PC-9 (cell line): ENCODE measurements at regions of chr12 and their contacts with region 1.

Region 1: DNA sequence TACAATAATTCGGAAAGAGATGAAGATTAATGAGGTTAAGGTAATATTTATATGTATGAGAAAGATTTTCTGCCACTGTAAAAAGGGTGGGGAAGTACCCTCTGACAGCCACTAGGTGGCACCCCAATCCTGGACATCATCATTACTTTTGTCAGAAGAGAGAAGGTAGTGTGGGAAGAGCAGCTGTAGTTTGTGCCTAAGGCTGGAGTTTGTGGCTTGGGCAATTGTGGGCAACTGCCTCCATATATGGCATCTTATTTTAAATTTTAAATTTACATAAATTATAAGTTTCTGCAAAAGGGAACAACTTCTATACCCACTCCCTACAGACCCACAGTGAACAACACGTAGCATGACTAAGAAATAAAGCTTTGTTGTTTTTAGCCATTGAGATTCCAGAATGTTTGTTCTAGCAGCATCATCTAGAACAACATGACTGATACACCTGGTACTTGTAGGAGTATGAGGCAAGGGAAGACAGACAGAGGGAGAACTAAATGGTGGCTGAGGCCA is 34.4 kb upstream of the SYCP3 start:
- DNase-seq: peak; percentile 38 to 42
- H3K4me3 ChIP-seq: no peak overlapping the region
- H3K27ac ChIP-seq: no peak overlapping the region
- H3K4me1 ChIP-seq: no peaks in the 10 kb centered on the region
- H3K27me3 ChIP-seq: no peaks in the 10 kb centered on the region
- CTCF ChIP-seq: peak; percentile 96

Region 2: GRCh38 chr12:100955139-100955538 is 818.6 kb before region 1 on chr12:
- CTCF ChIA-PET with region 1: no interaction called
- POLR2A ChIA-PET with region 1: no interaction called
- intact Hi-C with region 1: no loop called
- DNase-seq: no peak
- H3K4me3 ChIP-seq: no peak overlapping the region
- H3K27ac ChIP-seq: no peak overlapping the region
- H3K4me1 ChIP-seq: no peaks in the 10 kb centered on the region
- H3K27me3 ChIP-seq: peaks cover 27% of the 10 kb centered on the region; the same call in 1 of the 2 replicates
- CTCF ChIP-seq: no peak

Region 3: DNA sequence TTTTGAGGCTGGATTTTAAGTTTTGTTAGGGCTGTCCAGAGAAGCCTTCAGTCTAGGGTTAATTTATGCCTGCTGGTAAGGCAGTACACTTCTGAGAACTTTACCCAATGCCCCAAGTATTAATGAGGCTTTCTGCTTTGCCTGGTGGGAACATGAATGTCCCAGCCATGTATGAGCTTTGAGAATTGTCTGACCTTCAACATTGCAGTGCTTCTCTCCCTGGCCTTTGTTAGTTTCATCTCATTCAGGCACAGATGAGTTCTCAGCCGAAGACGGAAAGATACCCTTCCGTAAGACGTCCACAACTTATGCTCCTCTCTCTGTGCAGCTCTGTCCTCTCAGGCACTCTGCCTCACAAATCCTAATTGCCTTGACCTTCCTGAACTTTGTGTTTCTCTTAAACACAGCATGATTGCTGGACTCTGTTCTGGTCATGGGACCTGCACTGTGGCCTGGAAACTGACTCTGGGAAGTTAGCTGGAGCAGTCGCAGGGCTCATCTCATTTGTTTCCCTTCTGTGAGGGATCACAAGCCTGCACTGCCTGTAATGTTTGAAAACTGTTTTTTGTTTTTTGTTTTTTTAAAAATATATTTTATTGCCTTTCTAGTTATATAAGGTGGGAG is 60.5 kb before region 1 on chr12:
- CTCF ChIA-PET with region 1: no interaction called
- POLR2A ChIA-PET with region 1: no interaction called
- intact Hi-C with region 1: no loop called
- DNase-seq: no peak
- H3K4me3 ChIP-seq: no peak overlapping the region
- H3K27ac ChIP-seq: no peak overlapping the region
- H3K4me1 ChIP-seq: no peaks in the 10 kb centered on the region
- H3K27me3 ChIP-seq: no peaks in the 10 kb centered on the region
- CTCF ChIP-seq: no peak

Region 4: DNA sequence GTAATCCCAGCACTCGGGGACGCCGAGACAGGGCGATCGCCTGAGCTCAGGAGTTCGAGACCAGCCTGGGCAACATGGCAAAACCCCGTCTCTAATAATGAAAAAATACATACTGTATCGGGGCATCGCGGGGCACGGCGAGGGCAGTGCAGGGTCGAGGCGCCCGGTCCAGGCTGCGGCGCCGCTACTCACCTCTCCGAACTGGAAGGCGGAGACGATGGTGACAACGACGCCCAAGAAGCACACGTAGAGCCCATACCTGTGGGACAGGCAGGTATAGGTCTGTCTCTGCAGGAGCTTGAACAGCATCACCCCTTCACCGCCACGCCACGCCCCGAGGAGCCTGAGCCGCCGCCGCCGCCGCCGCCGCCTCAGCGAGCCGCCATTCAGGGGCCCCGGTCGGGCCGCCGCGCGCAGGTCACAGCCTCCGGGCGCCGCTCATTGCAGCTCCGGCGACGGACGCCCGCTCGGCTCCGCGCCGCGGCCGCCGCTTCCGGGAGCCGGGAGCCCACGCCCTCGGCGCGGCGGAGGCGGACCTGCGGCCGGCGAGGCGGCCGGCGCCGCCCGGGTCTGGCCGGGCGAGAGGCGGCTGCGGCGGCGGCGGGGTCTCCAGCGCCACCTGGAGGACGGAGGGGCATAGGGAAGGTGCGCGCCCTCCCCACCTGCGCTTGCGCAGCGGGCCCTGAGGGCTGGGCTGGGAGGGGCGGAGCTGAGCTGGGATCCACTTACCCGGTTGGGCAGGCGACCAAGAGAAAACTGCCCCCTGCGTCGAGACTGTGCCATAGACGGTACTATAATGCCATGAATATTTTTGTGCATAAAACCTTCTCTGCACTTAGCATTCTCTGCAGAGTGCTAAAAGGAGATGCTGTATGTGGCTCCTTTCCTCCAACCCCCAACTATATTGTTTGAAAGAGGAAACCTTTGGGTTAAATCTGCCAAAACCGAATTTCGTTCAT is 56.9 kb after region 1 on chr12 and contains the start of gene GNPTAB:
- CTCF ChIA-PET with region 1: interaction called, 11 read pairs
- POLR2A ChIA-PET with region 1: no interaction called
- intact Hi-C with region 1: loop called (anchors 1 kb)
- DNase-seq: peak; percentile 73 to 95
- H3K4me3 ChIP-seq: peak within 1 kb of the TSS; percentile 90
- H3K27ac ChIP-seq: no peak within 1 kb of the TSS
- H3K4me1 ChIP-seq: peaks cover 8% of the 10 kb centered on the region; the same call in 1 of the 2 replicates
- H3K27me3 ChIP-seq: no peaks in the 10 kb centered on the region
- CTCF ChIP-seq: peak; percentile 70
- total RNA-seq, gene GNPTAB: 22.0 and 26.5 TPM in 2 replicates

Region 5: DNA sequence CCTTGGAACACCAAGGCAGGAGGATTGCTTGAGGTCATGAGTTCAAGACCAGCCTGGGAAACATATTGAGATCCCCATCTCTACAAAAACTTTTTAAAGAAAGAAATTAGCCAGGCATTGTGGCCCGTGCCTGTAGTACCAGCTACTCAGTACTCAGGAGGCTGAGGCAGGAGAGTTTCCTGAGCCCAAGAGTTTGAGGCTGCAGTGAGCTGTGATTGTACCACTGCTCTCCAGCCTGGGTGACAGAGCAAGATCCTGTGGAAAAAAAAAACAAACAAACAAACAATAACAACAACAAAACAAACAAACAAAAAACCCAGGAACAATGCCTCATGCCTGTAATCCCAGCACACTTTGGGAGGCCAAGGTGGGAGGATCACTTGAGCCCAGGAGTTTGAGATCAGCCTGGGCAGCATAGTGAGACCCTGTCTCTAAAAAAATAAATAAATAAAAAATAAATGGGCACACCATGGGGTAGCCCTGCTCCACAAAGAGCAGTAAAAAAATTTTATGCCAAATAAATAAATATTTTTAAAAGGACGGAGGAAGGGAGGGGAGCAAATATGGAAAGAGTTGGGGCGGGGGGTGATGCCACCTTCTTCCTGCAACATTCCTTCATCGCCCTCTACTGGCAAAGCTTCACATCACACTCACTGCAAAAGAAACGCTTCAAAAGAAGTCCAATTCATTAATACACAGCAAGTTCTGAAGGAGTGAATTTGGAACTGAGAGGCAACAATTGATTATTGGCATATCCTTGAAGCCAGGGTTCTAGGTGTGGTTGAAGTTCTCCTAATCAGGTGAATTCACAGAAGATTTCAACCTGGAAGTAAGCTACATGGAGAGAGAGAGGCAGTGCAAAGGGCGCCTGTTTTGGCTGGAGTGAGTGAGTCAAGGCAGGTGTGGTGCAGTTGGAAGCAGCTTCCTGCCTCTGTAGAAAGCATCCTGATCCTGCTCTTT is 65.9 kb after region 1 on chr12:
- CTCF ChIA-PET with region 1: interaction called, 4 read pairs
- POLR2A ChIA-PET with region 1: no interaction called
- intact Hi-C with region 1: loop called (anchors 2 kb)
- DNase-seq: peak in 1 of 2 experiments; percentile 46
- H3K4me3 ChIP-seq: no peak overlapping the region
- H3K27ac ChIP-seq: no peak overlapping the region
- H3K4me1 ChIP-seq: peaks cover 7% of the 10 kb centered on the region; the same call in 1 of the 2 replicates
- H3K27me3 ChIP-seq: no peaks in the 10 kb centered on the region
- CTCF ChIP-seq: peak; percentile 90

Region 6: GRCh38 chr12:102095675-102096263 is 322.1 kb after region 1 on chr12:
- CTCF ChIA-PET with region 1: no interaction called
- POLR2A ChIA-PET with region 1: no interaction called
- intact Hi-C with region 1: loop called (anchors 10 kb)
- DNase-seq: peak in 1 of 2 experiments; percentile 41
- H3K4me3 ChIP-seq: no peak overlapping the region
- H3K27ac ChIP-seq: no peak overlapping the region
- H3K4me1 ChIP-seq: no peaks in the 10 kb centered on the region
- H3K27me3 ChIP-seq: no peaks in the 10 kb centered on the region
- CTCF ChIP-seq: peak; percentile 65

Region 7: DNA sequence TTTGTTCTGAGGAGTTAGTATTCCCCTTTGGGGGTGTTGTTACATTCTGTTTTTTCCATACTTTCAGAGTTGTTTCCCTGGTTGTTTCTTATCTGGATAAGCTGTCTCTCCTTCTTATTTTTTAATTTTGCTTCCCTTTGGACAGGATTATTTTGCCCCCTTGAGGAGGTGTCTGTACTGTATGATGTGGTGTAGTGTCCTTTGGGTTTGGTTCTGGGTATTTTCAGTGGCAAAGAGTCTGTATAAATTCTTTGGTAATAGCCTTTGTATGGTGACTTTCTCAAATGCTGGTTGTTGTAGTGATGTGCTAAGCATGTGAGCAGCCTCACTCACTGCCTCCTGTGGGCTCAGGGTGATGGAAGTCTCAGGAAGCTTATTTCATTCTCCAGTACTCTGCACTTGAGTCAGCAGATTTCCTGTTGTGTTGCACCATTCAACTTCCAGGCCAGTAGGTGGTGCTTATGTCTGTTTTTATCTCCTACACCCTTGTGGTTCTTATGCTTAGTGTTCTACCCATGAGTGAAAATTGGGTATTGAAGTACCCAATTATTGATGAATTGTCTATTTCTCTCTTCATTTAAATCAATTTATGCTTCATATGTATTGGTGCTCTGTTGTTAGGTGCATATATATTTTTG is 527.2 kb after region 1 on chr12:
- CTCF ChIA-PET with region 1: no interaction called
- POLR2A ChIA-PET with region 1: no interaction called
- intact Hi-C with region 1: loop called (anchors 10 kb)
- DNase-seq: peak in 1 of 2 experiments; percentile 45
- H3K4me3 ChIP-seq: no peak overlapping the region
- H3K27ac ChIP-seq: no peak overlapping the region
- H3K4me1 ChIP-seq: no peaks in the 10 kb centered on the region
- H3K27me3 ChIP-seq: no peaks in the 10 kb centered on the region
- CTCF ChIP-seq: peak; percentile 60

Region 8: DNA sequence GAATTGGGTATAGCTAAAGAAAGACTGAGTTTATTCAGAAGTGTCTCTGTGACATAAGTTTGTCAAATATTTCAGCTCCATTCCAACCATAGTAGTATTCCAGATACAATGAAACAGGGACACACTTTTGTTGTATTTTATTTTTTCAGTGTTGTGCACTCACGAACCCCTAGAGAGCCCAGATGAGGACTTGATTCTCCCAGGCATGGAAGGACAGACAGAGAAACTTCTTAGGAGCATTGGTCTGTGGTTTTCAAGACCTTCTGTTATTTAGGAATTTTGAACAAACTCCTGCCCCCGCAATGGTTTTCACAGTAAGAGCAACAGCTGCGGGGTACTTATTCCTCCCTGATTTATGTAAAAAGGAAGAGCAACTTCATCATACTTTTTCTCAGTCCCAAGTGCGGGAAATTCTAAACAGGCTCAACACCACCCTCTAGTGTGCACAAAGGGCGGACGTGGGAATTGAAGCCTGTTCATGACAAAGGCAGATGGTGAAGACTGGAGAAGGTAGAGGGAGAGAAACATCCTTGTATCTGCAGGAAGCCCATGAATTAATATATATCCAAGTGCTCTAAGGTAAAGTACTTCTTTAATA is 995.7 kb after region 1 on chr12:
- CTCF ChIA-PET with region 1: no interaction called
- POLR2A ChIA-PET with region 1: no interaction called
- intact Hi-C with region 1: loop called (anchors 5 kb)
- DNase-seq: peak; percentile 47 to 48
- H3K4me3 ChIP-seq: no peak overlapping the region
- H3K27ac ChIP-seq: no peak overlapping the region
- H3K4me1 ChIP-seq: no peaks in the 10 kb centered on the region
- H3K27me3 ChIP-seq: no peaks in the 10 kb centered on the region
- CTCF ChIP-seq: peak; percentile 78